ENCODE measurements at regions of chr10 and their contacts with region 1.

Region 1: DNA sequence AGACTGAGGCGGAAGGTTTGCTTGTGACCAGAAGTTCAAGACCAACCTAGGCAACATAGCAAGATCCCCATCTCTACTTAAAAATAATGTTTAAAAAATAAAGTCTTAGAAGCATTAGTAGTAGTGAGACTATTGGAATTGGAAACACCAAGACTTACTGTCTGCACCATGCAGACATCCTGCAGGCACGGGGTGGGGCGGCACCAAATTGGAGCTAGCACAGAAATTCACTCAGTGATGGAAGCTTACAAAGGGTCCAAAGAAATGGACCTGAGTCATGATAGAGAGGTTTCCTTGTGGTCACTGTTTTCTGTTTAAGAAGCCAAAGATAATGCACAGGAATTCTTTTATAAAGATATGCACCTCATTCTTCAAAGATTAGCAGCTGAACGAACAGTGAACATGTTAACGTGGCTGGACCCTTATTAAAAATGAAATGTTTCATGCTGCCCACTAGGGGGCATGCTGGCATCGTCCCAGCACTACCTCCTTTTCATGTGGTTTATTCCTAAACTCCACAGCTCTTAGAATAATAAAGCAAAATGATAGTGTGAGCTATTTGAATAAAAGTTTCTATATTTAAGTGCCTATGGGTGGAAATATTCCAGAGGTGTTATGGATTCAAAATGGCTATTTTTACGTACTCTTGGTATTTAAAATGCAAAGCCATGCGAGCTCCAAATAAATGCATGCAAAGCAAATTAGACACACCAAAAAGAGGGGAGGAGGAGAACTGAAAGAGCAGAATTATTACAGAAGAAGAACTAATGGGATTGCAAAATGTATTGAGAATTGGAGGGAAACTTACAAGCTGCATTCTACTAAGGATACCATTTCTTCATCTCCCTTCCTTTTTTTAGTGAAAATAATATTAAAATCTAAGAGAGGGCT is 28.6 kb downstream of the PDSS1 start:
- DNase-seq: peak; percentile 66 to 73
- H3K4me3 ChIP-seq: no peak overlapping the region
- H3K4me1 ChIP-seq: peaks cover 12% of the 10 kb centered on the region
- H3K27me3 ChIP-seq: no peaks in the 10 kb centered on the region

Region 2: DNA sequence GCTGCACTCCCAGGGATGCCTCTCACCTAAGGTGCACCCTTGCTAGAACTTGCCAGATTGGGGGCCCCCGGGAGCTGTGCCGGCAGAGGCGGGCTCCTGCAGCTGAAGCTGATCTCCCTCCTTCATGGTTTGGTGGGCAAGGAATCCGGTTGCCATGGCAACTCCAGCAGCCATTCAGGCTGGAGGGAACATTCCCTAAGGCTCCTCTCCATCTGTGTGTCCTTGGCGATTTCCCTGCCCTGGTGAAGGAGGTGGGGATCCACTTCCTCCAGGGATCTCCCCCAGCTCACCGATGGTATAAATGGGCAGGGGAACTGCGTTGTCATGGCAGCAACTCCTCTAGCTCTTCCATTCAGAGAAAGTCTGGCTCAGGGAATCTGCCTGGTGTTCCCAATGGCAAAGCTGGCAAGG is 1600.9 kb before region 1 on chr10:
- in situ Hi-C with region 1: no loop called
- DNase-seq: peak in 1 of 2 experiments; percentile 37
- H3K4me3 ChIP-seq: no peak overlapping the region
- H3K4me1 ChIP-seq: no peaks in the 10 kb centered on the region
- H3K27me3 ChIP-seq: 0 out of 2 replicates have a peak, but pooled peaks cover 3% of the 10 kb centered on the region

Region 3: DNA sequence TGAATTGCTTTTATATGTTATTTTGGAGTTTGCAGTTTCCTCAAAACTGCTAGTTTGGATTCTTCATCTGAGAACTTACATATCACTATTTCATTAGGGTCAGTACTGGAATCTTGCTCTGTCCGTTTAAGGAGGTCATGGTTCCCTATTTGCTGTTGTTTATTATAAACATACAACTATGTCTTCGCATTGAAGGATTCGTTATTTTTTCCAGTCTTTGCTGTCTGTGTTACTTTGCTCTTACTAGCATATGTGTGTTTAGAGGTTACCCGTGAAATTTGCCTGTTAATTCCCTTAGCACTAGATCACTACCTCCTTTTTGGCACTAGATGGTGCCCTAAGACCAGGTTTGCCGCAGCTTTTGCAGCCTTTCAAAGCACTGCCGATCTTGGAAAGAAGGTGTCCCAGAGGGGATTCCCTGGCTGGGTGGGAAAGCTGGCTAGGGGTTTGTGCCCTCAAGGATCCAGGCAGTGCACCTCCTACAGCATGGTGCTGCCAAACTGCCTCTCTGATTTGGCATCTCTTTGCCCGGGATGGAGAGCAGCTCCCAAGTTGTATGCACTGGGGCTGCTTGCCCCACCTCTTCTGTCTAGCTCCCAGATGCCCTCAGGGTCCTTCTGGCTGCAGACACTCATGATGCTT is 391.0 kb before region 1 on chr10:
- in situ Hi-C with region 1: loop called (anchors 25 kb)
- DNase-seq: peak; percentile 66 to 70
- H3K4me3 ChIP-seq: no peak overlapping the region
- H3K4me1 ChIP-seq: no peaks in the 10 kb centered on the region
- H3K27me3 ChIP-seq: no peaks in the 10 kb centered on the region; the same call in 1 of the 2 replicates

Region 4: GRCh38 chr10:26881600-26882331 is 155.7 kb after region 1 on chr10:
- in situ Hi-C with region 1: loop called (anchors 5 kb)
- DNase-seq: peak in 1 of 2 experiments; percentile 79
- H3K4me3 ChIP-seq: no peak overlapping the region
- H3K4me1 ChIP-seq: no peaks in the 10 kb centered on the region
- H3K27me3 ChIP-seq: no peaks in the 10 kb centered on the region

Region 5: GRCh38 chr10:27099916-27100812 is 374.1 kb after region 1 on chr10 and contains the start of gene ANKRD26:
- in situ Hi-C with region 1: loop called (anchors 25 kb)
- DNase-seq: peak; percentile 97
- H3K4me3 ChIP-seq: peak within 1 kb of the TSS; percentile 81
- H3K4me1 ChIP-seq: peaks cover 7% of the 10 kb centered on the region
- H3K27me3 ChIP-seq: no peaks in the 10 kb centered on the region

Measured in HAP-1 (cell line).